Activated CD4-positive, alpha-beta T cell treated with anti-CD3 and anti-CD28 coated beads, Interleukin-2, amount 10 ng/mL, durations not matched to agents 7 days and 5 days (primary cell): ENCODE measurements at regions of chr17 and their contacts with region 1.

Region 1: DNA sequence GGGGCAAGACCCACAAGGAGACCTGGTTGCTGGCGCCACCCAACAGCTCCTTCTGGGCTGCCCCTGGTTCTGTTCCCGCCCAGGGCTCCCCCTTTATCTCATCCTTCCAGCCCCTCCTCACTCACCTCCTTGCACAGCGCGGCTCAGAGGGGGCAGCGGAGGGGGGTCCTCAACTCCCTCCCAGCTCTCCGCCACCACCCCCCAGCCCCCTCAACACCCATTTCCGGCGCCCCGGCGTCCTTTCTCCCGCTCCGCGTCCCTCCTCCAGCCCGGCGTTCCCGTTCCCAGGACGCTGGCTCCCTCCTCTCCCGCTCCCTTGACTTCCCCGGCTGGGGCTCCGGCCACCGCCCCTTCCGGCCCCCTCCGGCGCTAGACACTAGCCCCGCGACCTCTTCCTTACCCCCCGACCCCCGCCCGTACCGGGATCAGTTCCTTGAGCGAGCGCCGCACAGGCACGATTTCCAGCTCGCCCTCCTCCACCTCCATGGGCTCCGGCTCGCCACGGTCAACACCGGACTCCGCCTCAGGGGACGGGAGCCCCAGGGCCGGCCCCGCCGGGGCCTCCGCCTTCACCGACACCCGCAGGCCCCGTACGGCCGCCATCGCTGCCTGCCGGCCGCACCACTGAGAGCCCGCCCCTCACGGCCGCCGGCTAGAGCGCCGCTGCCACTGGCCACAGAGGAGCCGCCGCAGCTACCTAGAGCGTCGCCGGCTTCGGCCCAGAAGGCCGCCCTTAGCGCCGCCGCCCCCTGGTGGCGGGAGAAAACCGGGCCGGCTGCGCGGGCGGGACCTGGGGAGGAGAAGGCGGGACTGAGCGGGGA is at the start of gene NCBP3:
- DNase-seq: peak; percentile 89
- H3K4me3 Mint-ChIP-seq: peak within 1 kb of the TSS; percentile 96
- H3K27ac Mint-ChIP-seq: peak within 1 kb of the TSS; percentile 93
- H3K4me1 Mint-ChIP-seq: peaks cover 26% of the 10 kb centered on the region
- H3K27me3 Mint-ChIP-seq: peaks cover 10% of the 10 kb centered on the region
- total RNA-seq, gene NCBP3: 43.6 to 43.7 TPM

Region 2: GRCh38 chr17:3566551-3566950 is 279.3 kb before region 1 on chr17:
- CTCF ChIA-PET with region 1: no interaction called
- POLR2A ChIA-PET with region 1: no interaction called
- DNase-seq: no peak
- H3K4me3 Mint-ChIP-seq: no peak overlapping the region
- H3K27ac Mint-ChIP-seq: no peak overlapping the region
- H3K4me1 Mint-ChIP-seq: peaks cover 4% of the 10 kb centered on the region
- H3K27me3 Mint-ChIP-seq: no peaks in the 10 kb centered on the region

Region 3: DNA sequence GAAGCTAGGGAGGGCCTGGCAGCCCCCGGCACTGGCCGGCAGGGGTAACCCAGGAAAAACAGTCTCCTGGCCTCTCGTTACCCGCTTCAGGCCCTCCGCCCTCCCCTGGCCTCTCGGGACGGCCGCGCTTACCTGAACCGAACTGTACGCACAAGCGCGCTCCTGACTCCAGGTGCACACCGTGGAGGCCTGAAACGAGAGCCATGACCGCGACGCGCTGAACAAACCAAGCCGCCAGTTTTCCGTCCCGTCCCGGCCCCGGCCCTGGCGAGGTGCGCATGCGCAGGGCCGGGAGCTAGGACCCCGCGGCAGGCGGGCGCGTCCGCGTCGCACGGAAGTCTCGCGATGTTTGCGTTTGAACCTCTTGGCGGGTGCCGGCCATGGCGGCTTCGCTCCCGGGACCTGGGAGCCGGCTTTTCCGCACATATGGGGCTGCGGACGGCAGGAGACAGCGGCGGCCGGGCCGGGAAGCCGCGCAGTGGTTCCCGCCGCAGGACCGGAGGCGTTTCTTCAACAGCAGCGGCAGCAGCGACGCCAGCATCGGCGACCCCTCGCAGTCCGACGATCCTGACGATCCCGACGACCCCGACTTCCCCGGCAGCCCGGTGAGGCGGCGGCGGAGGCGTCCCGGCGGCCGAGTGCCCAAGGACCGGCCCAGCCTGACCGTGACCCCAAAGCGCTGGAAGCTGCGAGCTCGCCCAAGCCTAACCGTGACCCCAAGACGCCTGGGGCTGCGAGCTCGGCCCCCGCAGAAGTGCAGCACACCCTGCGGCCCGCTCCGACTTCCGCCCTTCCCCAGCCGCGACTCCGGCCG is 122.1 kb before region 1 on chr17 and contains the start of gene HASPIN:
- CTCF ChIA-PET with region 1: interaction called, 15 read pairs
- POLR2A ChIA-PET with region 1: no interaction called
- DNase-seq: peak; percentile 94
- H3K4me3 Mint-ChIP-seq: peak within 1 kb of the TSS; percentile 95
- H3K27ac Mint-ChIP-seq: peak within 1 kb of the TSS; percentile 89
- H3K4me1 Mint-ChIP-seq: peaks cover 65% of the 10 kb centered on the region
- H3K27me3 Mint-ChIP-seq: no peaks in the 10 kb centered on the region
- total RNA-seq, gene HASPIN: 27.6 to 31.2 TPM

Region 4: GRCh38 chr17:3827124-3827773 is 18.6 kb before region 1 on chr17:
- CTCF ChIA-PET with region 1: interaction called, 49 read pairs
- POLR2A ChIA-PET with region 1: no interaction called
- DNase-seq: peak; percentile 81
- H3K4me3 Mint-ChIP-seq: no peak overlapping the region
- H3K27ac Mint-ChIP-seq: no peak overlapping the region
- H3K4me1 Mint-ChIP-seq: peaks cover 5% of the 10 kb centered on the region
- H3K27me3 Mint-ChIP-seq: no peaks in the 10 kb centered on the region

Region 5: GRCh38 chr17:3865176-3865575 is 19.3 kb after region 1 on chr17:
- CTCF ChIA-PET with region 1: interaction called, 51 read pairs
- POLR2A ChIA-PET with region 1: no interaction called
- DNase-seq: no peak
- H3K4me3 Mint-ChIP-seq: no peak overlapping the region
- H3K27ac Mint-ChIP-seq: no peak overlapping the region
- H3K4me1 Mint-ChIP-seq: peaks cover 2% of the 10 kb centered on the region
- H3K27me3 Mint-ChIP-seq: no peaks in the 10 kb centered on the region

Region 6: DNA sequence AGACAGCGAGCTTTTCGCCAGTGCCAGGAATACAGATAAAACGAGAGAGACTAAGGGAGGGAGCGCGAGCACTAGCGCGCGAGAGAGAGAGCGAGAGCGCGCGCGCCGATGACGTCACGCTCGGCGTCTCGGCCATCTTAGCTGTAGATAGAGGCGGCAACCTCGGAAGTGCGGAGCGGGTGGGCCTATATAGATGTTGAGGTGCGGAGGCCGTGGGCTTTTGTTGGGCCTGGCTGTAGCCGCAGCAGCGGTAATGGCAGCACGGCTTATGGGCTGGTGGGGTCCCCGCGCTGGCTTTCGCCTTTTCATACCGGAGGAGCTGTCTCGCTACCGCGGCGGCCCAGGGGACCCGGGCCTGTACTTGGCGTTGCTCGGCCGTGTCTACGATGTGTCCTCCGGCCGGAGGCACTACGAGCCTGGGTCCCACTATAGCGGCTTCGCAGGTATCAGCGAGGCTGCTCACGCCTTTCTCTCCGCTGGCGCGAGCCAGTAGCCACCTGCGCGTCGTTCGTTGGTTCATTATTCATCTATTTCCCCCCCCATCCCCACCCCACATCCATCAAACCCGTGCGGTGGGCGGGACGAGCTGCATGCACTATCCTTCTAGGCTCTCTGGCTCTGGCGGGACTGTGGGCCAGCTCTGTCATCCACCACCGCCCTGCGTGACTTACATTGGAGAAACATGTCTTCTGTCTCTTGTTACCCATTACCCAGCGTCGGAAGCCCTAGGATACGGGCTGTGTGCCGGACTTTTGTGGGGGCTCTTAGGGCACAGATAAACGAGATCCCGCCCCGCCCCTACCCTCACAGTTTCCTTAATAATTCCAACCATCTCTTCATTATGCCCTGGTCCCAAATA is 298.0 kb after region 1 on chr17:
- CTCF ChIA-PET with region 1: interaction called, 10 read pairs
- POLR2A ChIA-PET with region 1: no interaction called
- DNase-seq: peak; percentile 91
- H3K4me3 Mint-ChIP-seq: peak overlapping the region; percentile 99
- H3K27ac Mint-ChIP-seq: peak overlapping the region; percentile 100
- H3K4me1 Mint-ChIP-seq: peaks cover 50% of the 10 kb centered on the region
- H3K27me3 Mint-ChIP-seq: no peaks in the 10 kb centered on the region